Adrenal gland (tissue), 19 donors: ENCODE measurements at regions of chr22 and their contacts with region 1.

Region 1: DNA sequence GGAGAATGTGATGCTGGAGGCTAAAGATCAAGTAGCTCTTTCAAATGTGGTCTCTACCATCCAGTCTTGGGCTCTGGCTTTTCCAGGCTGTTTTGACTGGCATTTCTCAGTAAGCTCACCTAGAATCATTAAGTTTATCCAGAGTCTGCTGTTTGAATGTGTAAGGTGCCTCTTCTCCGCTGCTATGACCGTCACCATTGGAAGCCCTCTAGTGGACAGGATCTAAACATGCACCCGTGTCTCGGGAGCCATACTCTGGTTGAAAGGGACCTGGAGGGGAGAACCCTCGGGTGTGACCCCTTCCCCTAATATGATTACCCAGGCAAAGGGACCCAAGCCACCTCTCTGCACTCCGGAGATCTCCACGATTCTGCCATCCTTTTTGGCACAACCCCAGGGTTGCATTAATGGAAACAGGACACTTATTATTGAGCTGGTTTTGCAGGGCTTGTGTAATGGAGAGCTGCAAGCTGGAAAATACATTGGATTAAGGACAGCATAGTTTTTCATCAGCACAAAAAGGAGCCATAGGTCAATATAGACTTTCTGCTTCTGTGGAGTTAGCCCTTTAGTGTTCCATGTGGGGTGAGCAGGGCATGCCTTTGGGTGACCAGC is 191.0 kb upstream of the LARGE1 start:
- DNase-seq: peak; percentile 21 to 64 (median 34)
- H3K4me3 ChIP-seq: no peak overlapping the region
- H3K27ac ChIP-seq: no peak overlapping the region
- H3K4me1 ChIP-seq: no peaks in the 10 kb centered on the region
- H3K27me3 ChIP-seq: peaks cover 5% of the 10 kb centered on the region
- CTCF ChIP-seq: peak; percentile 38 to 67 (median 60)
- POLR2A ChIP-seq: no peak

Region 2: DNA sequence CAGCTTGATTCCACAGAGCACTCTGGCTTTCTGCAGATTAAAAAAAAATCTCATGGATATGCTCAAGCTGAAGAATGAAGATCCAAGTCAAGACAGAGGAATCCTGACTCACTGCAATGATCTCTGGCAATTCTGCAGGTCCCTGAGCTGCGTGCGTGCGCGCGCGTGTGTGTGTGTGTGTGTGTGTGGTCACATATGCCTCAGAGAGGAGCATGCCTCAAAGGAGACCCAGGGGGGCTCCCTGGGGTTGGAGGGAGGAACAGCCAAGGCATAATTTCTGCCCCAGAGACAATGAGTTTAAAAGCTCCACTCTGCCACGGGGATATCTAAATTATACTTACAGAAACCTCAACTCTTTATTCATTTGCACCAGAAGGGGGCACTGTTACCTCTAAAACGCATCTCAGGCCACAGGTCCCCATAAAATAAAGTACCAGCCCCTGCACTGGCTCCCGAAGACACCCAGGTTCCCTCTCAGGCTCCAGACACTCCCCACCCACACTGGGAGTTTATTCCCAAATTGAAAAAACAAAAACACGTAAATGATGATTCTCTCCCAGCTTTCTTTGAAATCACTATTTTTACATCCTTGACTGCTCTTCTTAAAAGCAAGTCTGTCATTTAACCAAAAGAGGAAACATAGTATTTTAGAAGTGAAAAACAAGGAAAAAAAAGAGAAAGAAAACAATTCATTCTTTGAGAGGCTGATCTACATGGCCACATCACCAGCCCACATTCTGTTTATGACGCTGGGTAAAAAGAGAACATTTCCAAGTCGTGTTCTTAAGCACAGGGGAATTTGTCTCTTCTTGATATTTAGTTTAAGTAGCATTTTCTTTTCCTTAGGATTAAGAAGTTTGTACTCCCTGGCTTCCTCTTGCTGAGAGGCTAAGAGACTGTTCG is 592.0 kb before region 1 on chr22:
- intact Hi-C with region 1: loop called in 1 of 2 experiments (anchors 10 kb)
- DNase-seq: peak in 6 of 7 donors; percentile 26 to 67 (median 52)
- H3K4me3 ChIP-seq: no peak overlapping the region
- H3K27ac ChIP-seq: no peak overlapping the region
- H3K4me1 ChIP-seq: no peaks in the 10 kb centered on the region
- H3K27me3 ChIP-seq: no peaks in the 10 kb centered on the region
- CTCF ChIP-seq: peak; percentile 54 to 81 (median 70)
- POLR2A ChIP-seq: no peak

Region 3: GRCh38 chr22:33932997-33933396 is 178.3 kb before region 1 on chr22:
- intact Hi-C with region 1: loop called (anchors 5 kb)
- DNase-seq: no peak
- H3K4me3 ChIP-seq: no peak overlapping the region
- H3K27ac ChIP-seq: no peak overlapping the region
- H3K4me1 ChIP-seq: no peaks in the 10 kb centered on the region
- H3K27me3 ChIP-seq: no peaks in the 10 kb centered on the region
- CTCF ChIP-seq: no peak
- POLR2A ChIP-seq: no peak